Body of pancreas (tissue), 4 donors: ENCODE measurements at regions of chr21 and their contacts with region 1.

Region 1: DNA sequence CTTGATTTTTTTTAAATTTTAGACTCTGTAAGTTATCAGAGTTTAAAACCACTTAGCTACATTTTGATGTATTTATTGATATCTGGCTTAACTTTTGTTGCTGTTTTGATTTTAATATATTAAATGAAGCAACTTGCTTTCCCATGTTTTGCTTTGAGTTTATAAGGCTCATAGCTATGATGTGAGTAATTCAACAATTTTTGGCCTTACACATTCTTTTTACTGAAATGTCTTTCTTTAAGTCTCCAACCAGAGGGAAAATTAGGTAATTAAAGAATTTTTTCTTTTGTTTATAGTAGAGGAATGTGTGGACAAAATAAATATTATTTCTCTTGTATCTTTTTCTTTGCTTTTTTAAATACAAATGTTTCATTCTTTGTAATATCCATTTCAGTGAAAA is 258.3 kb upstream of the ADAMTS5 start:
- DNase-seq: no peak
- ATAC-seq: no peak
- H3K4me3 ChIP-seq: no peak overlapping the region
- H3K27ac ChIP-seq: no peak overlapping the region
- H3K4me1 ChIP-seq: no peaks in the 10 kb centered on the region
- H3K27me3 ChIP-seq: no peaks in the 10 kb centered on the region
- CTCF ChIP-seq: no peak
- POLR2A ChIP-seq: no peak

Region 2: GRCh38 chr21:27168084-27168483 is 57.1 kb before region 1 on chr21:
- intact Hi-C with region 1: loop called (anchors 10 kb)
- DNase-seq: no peak
- ATAC-seq: no peak
- H3K4me3 ChIP-seq: no peak overlapping the region
- H3K27ac ChIP-seq: no peak overlapping the region
- H3K4me1 ChIP-seq: no peaks in the 10 kb centered on the region
- H3K27me3 ChIP-seq: no peaks in the 10 kb centered on the region
- CTCF ChIP-seq: no peak
- POLR2A ChIP-seq: no peak